ENCODE measurements at regions of chr6 and their contacts with region 1.

Region 1: DNA sequence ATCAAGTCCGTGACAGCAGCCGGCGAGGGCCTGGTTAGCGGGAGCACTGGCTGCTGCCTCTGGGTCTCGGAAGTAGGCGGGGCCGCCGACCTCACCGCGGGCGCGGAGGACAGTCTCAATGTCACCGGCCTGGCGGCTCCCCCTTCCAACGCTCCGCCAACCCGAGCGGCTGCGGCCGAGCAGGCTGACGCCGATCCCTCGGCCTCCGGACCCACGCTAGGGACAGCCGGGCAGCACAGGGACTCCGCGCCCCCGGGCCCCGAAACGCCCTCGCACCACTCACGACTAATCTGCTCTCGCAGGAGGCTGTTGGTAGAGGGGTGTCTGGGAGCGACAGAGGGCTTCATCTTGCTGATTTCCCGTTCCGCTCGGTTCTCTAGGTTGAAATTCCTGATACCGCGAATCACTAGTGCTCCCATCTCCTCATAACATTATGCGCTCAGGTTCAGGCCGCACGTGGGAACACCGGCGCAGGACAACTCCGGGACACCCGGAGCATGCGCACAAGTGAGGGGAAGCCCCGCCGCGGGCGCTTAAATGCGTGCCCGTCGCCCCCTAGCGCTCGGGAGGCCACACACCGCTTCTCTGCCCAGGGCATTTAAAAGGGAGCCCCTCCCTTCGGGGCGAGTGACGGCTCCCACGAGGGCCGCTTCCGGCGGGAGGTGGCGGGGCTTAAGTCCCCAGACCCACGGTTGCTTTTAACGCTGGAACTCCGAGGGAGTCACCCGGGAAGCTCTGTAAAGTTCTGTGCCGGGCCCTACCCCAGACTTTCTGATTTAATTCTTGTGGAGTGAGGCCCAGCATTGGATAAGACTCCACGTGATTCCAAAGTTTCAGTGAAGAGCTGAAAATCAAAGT is at the start of gene NDUFAF4:
- DNase-seq: peak; percentile 96
- H3K4me3 Mint-ChIP-seq: peak within 1 kb of the TSS; percentile 91
- H3K27ac Mint-ChIP-seq: peak within 1 kb of the TSS; percentile 92
- H3K4me1 Mint-ChIP-seq: peaks cover 28% of the 10 kb centered on the region
- H3K27me3 Mint-ChIP-seq: peaks cover 9% of the 10 kb centered on the region
- total RNA-seq, gene NDUFAF4: 49.5 to 53.3 TPM

Region 2: GRCh38 chr6:95431637-95432228 is 1465.9 kb before region 1 on chr6:
- CTCF ChIA-PET with region 1: no interaction called
- intact Hi-C with region 1: loop called (anchors 5 kb)
- DNase-seq: peak; percentile 62
- H3K4me3 Mint-ChIP-seq: no peak overlapping the region
- H3K27ac Mint-ChIP-seq: no peak overlapping the region
- H3K4me1 Mint-ChIP-seq: no peaks in the 10 kb centered on the region
- H3K27me3 Mint-ChIP-seq: peaks cover 2% of the 10 kb centered on the region

Region 3: DNA sequence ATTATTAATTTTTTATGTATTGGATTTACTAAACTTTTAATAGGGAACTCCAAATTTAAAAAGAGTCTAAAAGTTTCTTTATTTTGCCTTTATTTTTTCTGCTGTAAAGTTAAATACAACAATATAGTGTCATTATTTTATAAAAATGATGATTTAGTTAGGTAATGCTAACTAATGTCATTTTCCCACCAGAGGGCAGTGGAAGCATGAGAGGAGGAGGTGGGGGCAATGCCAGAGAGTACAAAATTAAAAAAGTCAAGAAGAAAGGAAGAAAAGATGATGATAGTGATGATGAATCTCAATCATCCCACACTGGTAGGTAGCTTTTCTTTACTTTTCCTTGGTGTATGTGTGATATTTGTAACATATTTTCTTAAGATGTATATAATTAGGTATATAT is 354.9 kb before region 1 on chr6:
- CTCF ChIA-PET with region 1: no interaction called
- intact Hi-C with region 1: loop called (anchors 1 kb)
- DNase-seq: peak; percentile 6
- H3K4me3 Mint-ChIP-seq: no peak overlapping the region
- H3K27ac Mint-ChIP-seq: no peak overlapping the region
- H3K4me1 Mint-ChIP-seq: no peaks in the 10 kb centered on the region
- H3K27me3 Mint-ChIP-seq: no peaks in the 10 kb centered on the region

Region 4: DNA sequence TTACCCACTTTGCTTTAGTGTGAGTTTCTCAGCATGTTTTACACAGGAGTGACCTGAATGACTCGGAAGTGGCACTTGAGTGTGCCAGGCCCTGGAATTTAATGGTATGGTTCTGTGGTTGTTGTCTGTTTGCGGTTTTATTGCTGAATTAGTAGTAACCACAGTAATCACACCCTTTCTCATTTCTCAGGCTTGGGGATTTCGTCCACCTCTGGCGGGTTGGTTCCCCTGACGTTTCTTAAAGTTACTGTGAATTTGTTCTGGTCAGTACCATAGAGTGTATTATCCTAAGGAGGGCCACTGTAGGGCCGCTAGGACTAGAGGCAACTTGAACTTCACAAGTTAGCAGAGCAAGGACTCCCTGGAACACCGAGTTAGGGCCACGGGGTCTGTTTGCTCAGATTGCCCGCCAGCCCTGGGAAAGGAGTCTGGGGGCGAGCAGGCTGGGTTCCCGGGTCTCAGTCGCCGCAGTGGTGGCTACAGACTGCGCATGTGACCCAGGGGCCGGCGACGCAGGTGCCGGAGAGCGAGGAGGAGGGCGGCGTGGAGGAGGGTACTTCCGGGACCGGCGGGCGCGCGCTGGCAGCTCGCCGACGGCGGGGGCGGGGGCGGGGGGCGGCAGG is 26.4 kb after region 1 on chr6:
- CTCF ChIA-PET with region 1: interaction called, 13 read pairs
- intact Hi-C with region 1: loop called (anchors 1 kb)
- DNase-seq: no peak
- H3K4me3 Mint-ChIP-seq: peak overlapping the region; percentile 90
- H3K27ac Mint-ChIP-seq: peak overlapping the region; percentile 75
- H3K4me1 Mint-ChIP-seq: peaks cover 37% of the 10 kb centered on the region
- H3K27me3 Mint-ChIP-seq: no peaks in the 10 kb centered on the region

Region 5: GRCh38 chr6:96975852-96976251 is 78.2 kb after region 1 on chr6:
- CTCF ChIA-PET with region 1: no interaction called
- intact Hi-C with region 1: no loop called
- DNase-seq: no peak
- H3K4me3 Mint-ChIP-seq: no peak overlapping the region
- H3K27ac Mint-ChIP-seq: no peak overlapping the region
- H3K4me1 Mint-ChIP-seq: no peaks in the 10 kb centered on the region
- H3K27me3 Mint-ChIP-seq: no peaks in the 10 kb centered on the region

Region 6: GRCh38 chr6:97059473-97059872 is 161.9 kb after region 1 on chr6:
- CTCF ChIA-PET with region 1: interaction called, 34 read pairs
- intact Hi-C with region 1: loop called (anchors 1 kb)
- DNase-seq: no peak
- H3K4me3 Mint-ChIP-seq: no peak overlapping the region
- H3K27ac Mint-ChIP-seq: no peak overlapping the region
- H3K4me1 Mint-ChIP-seq: peaks cover 2% of the 10 kb centered on the region
- H3K27me3 Mint-ChIP-seq: no peaks in the 10 kb centered on the region

Region 7: DNA sequence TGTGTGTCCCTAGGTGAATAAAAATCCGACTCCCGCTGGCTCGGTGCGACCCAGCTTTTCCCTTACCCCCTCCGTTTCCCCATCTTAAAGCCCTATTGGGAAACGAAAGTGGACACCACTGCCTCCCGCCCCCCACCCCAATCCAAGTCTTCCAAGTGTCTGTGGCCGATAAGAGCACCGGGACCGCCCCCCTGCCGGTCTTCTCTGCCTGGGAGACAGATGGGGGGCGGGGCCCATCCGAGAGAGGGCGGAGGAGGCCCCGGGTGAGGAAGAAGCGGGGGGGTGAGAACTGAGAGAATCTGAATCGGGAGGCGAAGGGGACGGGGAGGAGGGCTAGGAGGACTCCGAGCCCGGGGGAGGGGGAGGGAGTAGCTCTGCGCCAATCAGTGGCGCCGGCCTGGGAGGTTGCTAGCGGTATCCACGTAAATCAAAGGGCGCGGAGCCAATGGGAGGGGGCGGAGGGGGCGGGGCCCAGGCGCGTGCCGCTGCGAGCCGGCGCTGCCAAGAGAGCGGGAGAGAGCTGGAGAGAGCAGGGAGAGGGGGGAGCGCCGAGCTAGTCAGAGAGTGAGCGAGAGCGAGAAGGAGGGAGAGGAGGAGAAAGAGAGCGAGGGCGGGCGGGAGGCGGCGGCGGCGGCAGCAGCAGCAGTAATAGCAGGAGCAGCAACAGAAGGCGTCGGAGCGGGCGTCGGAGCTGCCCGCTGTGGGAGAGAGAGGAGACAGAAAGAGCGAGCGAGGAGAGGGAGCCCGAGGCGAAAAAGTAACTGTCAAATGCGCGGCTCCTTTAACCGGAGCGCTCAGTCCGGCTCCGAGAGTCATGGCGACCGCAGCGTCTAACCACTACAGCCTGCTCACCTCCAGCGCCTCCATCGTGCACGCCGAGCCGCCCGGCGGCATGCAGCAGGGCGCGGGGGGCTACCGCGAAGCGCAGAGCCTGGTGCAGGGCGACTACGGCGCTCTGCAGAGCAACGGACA is 1936.7 kb after region 1 on chr6 and contains the start of gene POU3F2:
- CTCF ChIA-PET with region 1: no interaction called
- intact Hi-C with region 1: loop called (anchors 5 kb)
- DNase-seq: peak; percentile 78
- H3K4me3 Mint-ChIP-seq: peak within 1 kb of the TSS; percentile 73
- H3K27ac Mint-ChIP-seq: no peak within 1 kb of the TSS
- H3K4me1 Mint-ChIP-seq: peaks cover 34% of the 10 kb centered on the region
- H3K27me3 Mint-ChIP-seq: peaks cover 72% of the 10 kb centered on the region
- total RNA-seq, gene POU3F2: not detected